Dendritic cell treated with granulocyte-macrophage colony-stimulating factor and Interleukin-4, amounts not matched to agents 40 ng/mL and 50 ng/mL, for 4 days (primary cell): ENCODE measurements at regions of chr12 and their contacts with region 1.

Region 1: DNA sequence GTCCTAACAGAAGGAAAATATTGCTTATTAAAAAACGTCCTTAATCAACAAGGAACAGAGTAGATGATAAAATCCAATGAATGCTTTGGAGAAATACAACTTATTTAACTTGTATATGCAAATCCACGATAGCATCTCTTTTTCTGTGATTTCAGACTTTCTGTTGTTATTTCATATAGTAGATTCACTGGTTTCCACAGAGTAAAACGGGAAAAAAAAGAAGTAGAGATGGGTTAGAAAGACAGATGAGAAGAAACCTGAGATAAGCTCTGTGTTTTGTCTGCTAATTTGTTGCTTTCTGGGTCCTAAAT is 447.7 kb downstream of the RERGL start:
- H3K4me3 Mint-ChIP-seq: no peak overlapping the region
- H3K27ac Mint-ChIP-seq: no peak overlapping the region
- H3K4me1 Mint-ChIP-seq: no peaks in the 10 kb centered on the region
- H3K27me3 Mint-ChIP-seq: no peaks in the 10 kb centered on the region

Region 2: DNA sequence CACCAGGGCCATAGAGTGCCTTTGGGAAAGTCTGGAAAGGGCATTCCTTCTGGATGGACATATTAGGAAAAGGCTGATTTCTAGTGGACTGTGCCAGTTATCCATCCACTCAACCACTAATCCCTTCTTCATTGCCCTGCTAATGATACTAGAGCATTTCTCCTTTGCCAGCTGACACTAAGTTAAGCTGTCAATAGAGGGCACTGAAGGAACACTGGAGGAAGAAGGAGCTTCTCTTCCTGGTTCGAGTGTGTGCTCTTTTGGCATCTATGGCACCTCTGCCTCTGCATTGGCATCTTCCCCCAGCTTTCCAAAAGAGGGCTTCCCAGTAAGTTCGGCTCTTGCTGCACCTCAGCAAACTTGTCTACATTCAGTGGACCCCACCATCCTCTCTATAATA is 1565.7 kb before region 1 on chr12:
- intact Hi-C with region 1: loop called (anchors 1 kb)
- H3K4me3 Mint-ChIP-seq: no peak overlapping the region
- H3K27ac Mint-ChIP-seq: no peak overlapping the region
- H3K4me1 Mint-ChIP-seq: no peaks in the 10 kb centered on the region
- H3K27me3 Mint-ChIP-seq: no peaks in the 10 kb centered on the region

Region 3: GRCh38 chr12:16165506-16165905 is 1476.8 kb before region 1 on chr12:
- intact Hi-C with region 1: loop called (anchors 5 kb)
- H3K4me3 Mint-ChIP-seq: no peak overlapping the region
- H3K27ac Mint-ChIP-seq: no peak overlapping the region
- H3K4me1 Mint-ChIP-seq: peaks cover 5% of the 10 kb centered on the region
- H3K27me3 Mint-ChIP-seq: peaks cover 3% of the 10 kb centered on the region

Region 4: GRCh38 chr12:16385782-16386646 is 1256.3 kb before region 1 on chr12:
- intact Hi-C with region 1: loop called (anchors 2 kb)
- H3K4me3 Mint-ChIP-seq: no peak overlapping the region
- H3K27ac Mint-ChIP-seq: no peak overlapping the region
- H3K4me1 Mint-ChIP-seq: peaks cover 11% of the 10 kb centered on the region
- H3K27me3 Mint-ChIP-seq: no peaks in the 10 kb centered on the region

Region 5: GRCh38 chr12:17841496-17841895 is 199.2 kb after region 1 on chr12:
- intact Hi-C with region 1: no loop called
- H3K4me3 Mint-ChIP-seq: no peak overlapping the region
- H3K27ac Mint-ChIP-seq: no peak overlapping the region
- H3K4me1 Mint-ChIP-seq: no peaks in the 10 kb centered on the region
- H3K27me3 Mint-ChIP-seq: no peaks in the 10 kb centered on the region